ENCODE measurements at regions of chr17 and their contacts with region 1.

Region 1: GRCh38 chr17:21451975-21452374 is 75.8 kb downstream of the KCNJ12 start:
- DNase-seq: no peak
- ATAC-seq: no peak
- H3K4me3 ChIP-seq: no peak overlapping the region
- H3K27ac ChIP-seq: no peak overlapping the region
- H3K4me1 ChIP-seq: no peaks in the 10 kb centered on the region
- H3K27me3 ChIP-seq: no peaks in the 10 kb centered on the region
- CTCF ChIP-seq: no peak
- EP300 ChIP-seq: no peak
- POLR2A ChIP-seq: no peak
- RAD21 ChIP-seq: no peak

Region 2: DNA sequence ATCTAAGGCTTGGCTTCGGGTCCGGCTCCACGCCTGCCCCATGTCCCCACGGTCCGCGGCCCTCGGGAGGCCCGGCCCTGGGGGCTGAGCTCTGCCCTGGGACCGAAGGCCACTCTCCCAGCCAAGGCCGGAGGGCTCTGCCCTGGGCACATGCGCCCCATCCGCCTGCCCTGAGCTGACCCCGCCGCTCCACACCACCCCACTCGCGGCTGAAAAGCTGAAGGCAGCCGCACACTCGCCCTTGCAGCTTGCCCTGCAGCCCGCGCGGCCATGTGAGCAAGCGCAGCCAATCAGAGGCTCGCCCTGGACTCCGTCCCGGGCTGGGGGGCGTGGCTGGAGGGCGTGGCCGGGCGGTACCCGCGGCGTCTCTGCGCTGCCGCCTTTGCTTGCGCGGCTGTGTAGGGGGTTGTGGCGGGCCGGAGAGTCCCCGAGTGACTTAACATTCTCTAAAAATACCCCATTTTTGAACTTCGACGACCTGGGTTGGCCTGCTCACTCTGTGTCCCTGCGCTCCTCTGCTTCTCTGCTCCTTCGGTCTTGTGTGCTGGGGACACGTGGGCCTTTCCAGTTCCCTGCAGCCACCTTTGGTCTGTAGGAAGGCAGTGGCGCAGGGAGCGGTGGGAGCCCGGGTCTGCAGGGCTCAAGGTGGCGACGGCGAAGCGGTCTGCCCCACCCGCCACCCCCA is 176.3 kb before region 1 on chr17:
- CTCF ChIA-PET with region 1: interaction called, 3 read pairs
- POLR2A ChIA-PET with region 1: no interaction called
- RAD21 ChIA-PET with region 1: interaction called, 4 read pairs
- SMC1A ChIA-PET with region 1: interaction called, 5 read pairs
- in situ Hi-C with region 1: no loop called
- intact Hi-C with region 1: loop called (anchors 2 kb)
- DNase-seq: peak; percentile 43
- ATAC-seq: peak; percentile 97
- H3K4me3 ChIP-seq: peak overlapping the region; percentile 72
- H3K27ac ChIP-seq: no peak overlapping the region
- H3K4me1 ChIP-seq: peaks cover 10% of the 10 kb centered on the region
- H3K27me3 ChIP-seq: peaks cover 0 to 5% of the 10 kb centered on the region in 2 experiments; a peak in 3 of 4 replicates
- CTCF ChIP-seq: no peak
- EP300 ChIP-seq: no peak
- POLR2A ChIP-seq: peak; percentile 81
- RAD21 ChIP-seq: no peak

Region 3: GRCh38 chr17:21463779-21464407 is 11.9 kb after region 1 on chr17:
- CTCF ChIA-PET with region 1: no interaction called
- POLR2A ChIA-PET with region 1: no interaction called
- RAD21 ChIA-PET with region 1: no interaction called
- SMC1A ChIA-PET with region 1: no interaction called
- in situ Hi-C with region 1: no loop called
- intact Hi-C with region 1: no loop called
- DNase-seq: no peak
- ATAC-seq: no peak
- H3K4me3 ChIP-seq: no peak overlapping the region
- H3K27ac ChIP-seq: no peak overlapping the region
- H3K4me1 ChIP-seq: no peaks in the 10 kb centered on the region
- H3K27me3 ChIP-seq: no peaks in the 10 kb centered on the region; a peak in 2 of 4 replicates
- CTCF ChIP-seq: no peak
- EP300 ChIP-seq: no peak
- POLR2A ChIP-seq: no peak
- RAD21 ChIP-seq: no peak

Region 4: GRCh38 chr17:21573961-21574610 is 122.1 kb after region 1 on chr17:
- CTCF ChIA-PET with region 1: no interaction called
- POLR2A ChIA-PET with region 1: no interaction called
- RAD21 ChIA-PET with region 1: no interaction called
- SMC1A ChIA-PET with region 1: no interaction called
- in situ Hi-C with region 1: no loop called
- intact Hi-C with region 1: no loop called
- DNase-seq: no peak
- ATAC-seq: no peak
- H3K4me3 ChIP-seq: no peak overlapping the region
- H3K27ac ChIP-seq: no peak overlapping the region
- H3K4me1 ChIP-seq: no peaks in the 10 kb centered on the region
- H3K27me3 ChIP-seq: no peaks in the 10 kb centered on the region
- CTCF ChIP-seq: no peak
- EP300 ChIP-seq: no peak
- POLR2A ChIP-seq: no peak
- RAD21 ChIP-seq: no peak